Right cardiac atrium (tissue), 5 donors: ENCODE measurements at regions of chr13 and their contacts with region 1.

Region 1: GRCh38 chr13:113029487-113030258 is 60.7 kb downstream of the MCF2L start:
- DNase-seq: peak in 2 of 3 donors; percentile 45 to 74
- ATAC-seq: peak in 1 of 2 donors; percentile 43
- H3K4me3 ChIP-seq: no peak overlapping the region
- H3K27ac ChIP-seq: no peak overlapping the region
- H3K4me1 ChIP-seq: no peaks in the 10 kb centered on the region
- H3K27me3 ChIP-seq: no peaks in the 10 kb centered on the region

Region 2: GRCh38 chr13:112942689-112943308 is 86.9 kb before region 1 on chr13:
- intact Hi-C with region 1: loop called in 1 of 4 experiments (anchors 2 kb)
- DNase-seq: peak; percentile 96 to 99 (median 98)
- ATAC-seq: peak; percentile 95 to 96
- H3K4me3 ChIP-seq: peak overlapping the region; percentile 68
- H3K27ac ChIP-seq: no peak overlapping the region
- H3K4me1 ChIP-seq: no peaks in the 10 kb centered on the region
- H3K27me3 ChIP-seq: no peaks in the 10 kb centered on the region

Region 3: DNA sequence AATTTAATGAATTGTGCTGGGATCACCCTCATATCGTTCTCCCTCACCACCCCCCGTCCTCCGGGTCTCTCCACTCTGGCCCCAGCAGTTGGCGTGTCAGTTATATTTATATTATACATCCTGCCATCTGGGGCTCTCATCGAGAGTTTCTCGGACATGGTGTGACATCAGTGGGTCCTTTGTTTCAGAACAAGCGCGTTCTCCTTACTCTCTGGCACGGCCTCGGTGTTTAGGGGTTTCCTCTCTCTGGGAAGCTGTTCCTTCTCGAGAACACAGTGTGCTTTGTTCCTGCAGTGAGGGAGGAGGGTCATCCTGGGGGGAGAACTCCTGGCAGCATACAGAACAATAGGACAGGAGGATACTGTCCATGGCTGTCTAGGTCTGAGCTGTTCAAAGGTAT is 70.5 kb before region 1 on chr13:
- intact Hi-C with region 1: loop called in 1 of 4 experiments (anchors 10 kb)
- DNase-seq: peak in 1 of 3 donors; percentile 44
- ATAC-seq: peak; percentile 53 to 82
- H3K4me3 ChIP-seq: no peak overlapping the region
- H3K27ac ChIP-seq: no peak overlapping the region
- H3K4me1 ChIP-seq: peaks cover 2% of the 10 kb centered on the region
- H3K27me3 ChIP-seq: no peaks in the 10 kb centered on the region

Region 4: DNA sequence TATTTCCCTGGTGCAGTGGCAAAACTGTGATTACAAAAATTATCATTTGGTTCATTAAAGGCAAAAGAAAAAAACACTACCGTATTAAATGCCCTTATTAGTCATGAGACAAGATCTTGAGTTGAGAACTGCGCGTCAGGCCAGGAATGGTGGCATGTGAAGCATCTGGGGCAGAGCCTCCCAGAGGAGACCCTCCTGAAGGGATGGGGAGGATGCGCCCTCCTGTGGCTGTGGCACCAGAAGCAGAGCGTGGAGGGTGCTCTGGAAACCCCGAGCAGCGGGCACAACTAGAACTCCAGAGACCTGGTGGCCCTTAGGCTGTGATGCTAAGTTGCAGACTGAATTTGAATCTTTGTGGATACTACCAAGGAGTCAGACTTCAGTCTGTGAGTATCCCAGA is 191.2 kb after region 1 on chr13:
- intact Hi-C with region 1: loop called in 1 of 4 experiments (anchors 5 kb)
- DNase-seq: peak in 2 of 3 donors; percentile 77 to 80
- ATAC-seq: peak; percentile 35 to 66
- H3K4me3 ChIP-seq: no peak overlapping the region
- H3K27ac ChIP-seq: peak overlapping the region; percentile 60
- H3K4me1 ChIP-seq: peaks cover 6% of the 10 kb centered on the region
- H3K27me3 ChIP-seq: no peaks in the 10 kb centered on the region

Region 5: GRCh38 chr13:113393563-113394338 is 364.1 kb after region 1 on chr13:
- intact Hi-C with region 1: loop called in 1 of 4 experiments (anchors 10 kb)
- DNase-seq: peak; percentile 83 to 94 (median 91)
- ATAC-seq: peak; percentile 91 to 92
- H3K4me3 ChIP-seq: peak overlapping the region; percentile 62
- H3K27ac ChIP-seq: no peak overlapping the region
- H3K4me1 ChIP-seq: peaks cover 2% of the 10 kb centered on the region
- H3K27me3 ChIP-seq: no peaks in the 10 kb centered on the region